Left ventricle myocardium inferior (tissue), 1 donor: ENCODE measurements at regions of chr9 and their contacts with region 1.

Region 1: DNA sequence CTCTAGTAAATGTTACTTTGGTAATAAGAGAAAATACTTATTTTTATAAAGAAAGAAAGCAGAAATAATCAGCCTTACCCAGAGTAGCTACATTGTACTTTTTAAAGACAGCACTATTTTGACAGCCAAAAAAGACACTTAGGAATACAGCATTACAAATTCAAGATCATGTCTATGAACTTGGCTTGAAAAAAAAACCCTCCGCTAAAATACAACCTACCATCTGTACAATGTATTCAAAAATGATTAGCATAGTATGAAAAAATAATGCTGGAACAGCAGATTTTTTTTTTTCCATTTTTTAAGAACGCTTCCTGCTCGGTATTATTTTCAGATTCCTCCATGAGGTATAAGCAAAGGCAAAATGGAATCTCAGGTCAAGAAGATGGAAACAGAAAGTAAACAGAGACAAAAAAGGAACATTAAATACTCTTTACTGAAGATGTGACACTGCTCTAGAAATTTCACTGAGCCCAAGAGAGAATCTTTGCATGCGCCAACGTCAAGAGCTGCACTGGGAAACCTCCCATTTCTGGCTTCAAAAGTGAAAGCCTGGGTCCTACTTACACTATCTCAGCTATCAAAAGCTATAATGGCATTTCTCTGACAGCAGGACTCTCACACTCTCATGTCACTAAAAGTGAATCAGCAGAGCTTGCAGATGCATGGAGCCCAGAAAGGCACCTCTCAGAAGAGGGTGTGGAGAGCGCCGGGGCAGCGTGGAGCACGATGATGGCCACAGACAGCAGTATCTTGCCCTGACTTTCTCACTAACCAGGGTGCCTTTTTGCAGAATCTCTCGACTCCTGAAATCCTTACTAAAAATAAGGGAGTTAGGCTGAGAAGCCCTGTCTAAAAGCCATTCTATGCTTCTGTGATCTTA is 167.4 kb downstream of the ELAVL2 start:
- DNase-seq: no peak
- H3K4me3 ChIP-seq: peak overlapping the region; percentile 3
- H3K27ac ChIP-seq: no peak overlapping the region
- H3K4me1 ChIP-seq: peaks cover 6% of the 10 kb centered on the region
- H3K27me3 ChIP-seq: no peaks in the 10 kb centered on the region
- CTCF ChIP-seq: no peak

Region 2: GRCh38 chr9:23590276-23591000 is 68.2 kb before region 1 on chr9:
- intact Hi-C with region 1: loop called (anchors 10 kb)
- DNase-seq: no peak
- H3K4me3 ChIP-seq: peak overlapping the region; percentile 42
- H3K27ac ChIP-seq: peak overlapping the region; percentile 64
- H3K4me1 ChIP-seq: peaks cover 60% of the 10 kb centered on the region
- H3K27me3 ChIP-seq: no peaks in the 10 kb centered on the region
- CTCF ChIP-seq: no peak